Astrocyte of the cerebellum (primary cell): ENCODE measurements at regions of chr17 and their contacts with region 1.

Region 1: GRCh38 chr17:4852567-4853207 is 19.5 kb downstream of the MINK1 start:
- DNase-seq: peak; percentile 23
- H3K4me3 ChIP-seq: no peak overlapping the region
- CTCF ChIP-seq: no peak

Region 2: GRCh38 chr17:4728124-4728523 is 124.6 kb before region 1 on chr17:
- in situ Hi-C with region 1: loop called (anchors 5 kb)
- DNase-seq: no peak
- H3K4me3 ChIP-seq: no peak overlapping the region
- CTCF ChIP-seq: no peak

Region 3: DNA sequence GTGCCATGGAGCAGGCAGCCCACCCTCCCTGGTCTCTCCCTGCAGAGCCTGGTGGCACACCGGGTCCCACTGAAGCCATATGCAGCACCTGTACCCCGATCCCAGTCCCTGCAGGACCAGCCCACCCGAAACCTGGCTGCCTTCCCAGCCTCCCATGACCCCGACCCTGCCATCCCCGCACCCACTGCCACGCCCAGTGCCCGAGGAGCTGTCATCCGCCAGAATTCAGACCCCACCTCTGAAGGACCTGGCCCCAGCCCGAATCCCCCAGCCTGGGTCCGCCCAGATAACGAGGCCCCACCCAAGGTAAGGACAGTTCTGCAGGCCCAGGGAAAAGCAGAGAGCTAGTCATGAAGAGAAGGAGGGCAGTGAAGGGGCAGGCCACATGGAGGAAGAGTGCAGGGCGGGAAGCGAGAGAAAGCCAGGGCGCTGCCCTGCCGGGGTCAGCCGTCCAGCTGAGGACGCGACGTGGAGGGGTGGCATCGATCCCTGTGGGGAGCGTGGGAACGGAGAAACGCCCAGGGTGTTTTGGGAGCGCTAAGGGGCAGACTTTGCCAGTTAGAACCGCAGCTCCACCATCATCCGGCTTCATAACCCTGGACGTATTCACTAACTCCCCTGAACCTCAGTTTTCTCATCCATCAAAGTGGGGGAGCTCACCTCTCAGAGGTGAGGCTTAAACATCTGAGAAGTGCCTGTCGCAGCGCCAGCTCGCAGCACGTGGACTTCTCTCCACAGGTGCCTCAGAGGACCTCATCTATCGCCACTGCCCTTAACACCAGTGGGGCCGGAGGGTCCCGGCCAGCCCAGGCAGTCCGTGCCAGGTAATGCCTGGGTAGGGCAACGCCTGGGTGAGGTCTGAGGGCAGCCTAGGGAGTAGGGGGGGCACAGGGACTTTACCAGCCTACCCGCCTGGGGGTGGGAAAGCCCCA is 39.0 kb after region 1 on chr17:
- in situ Hi-C with region 1: no loop called
- DNase-seq: no peak
- H3K4me3 ChIP-seq: no peak overlapping the region
- CTCF ChIP-seq: no peak

Region 4: GRCh38 chr17:4903051-4903818 is 50.5 kb after region 1 on chr17 and contains the start of gene CHRNE:
- in situ Hi-C with region 1: no loop called
- DNase-seq: peak; percentile 71
- H3K4me3 ChIP-seq: no peak within 1 kb of the TSS
- CTCF ChIP-seq: peak; percentile 75